Activated naive CD4-positive, alpha-beta T cell treated with anti-CD3 and anti-CD28 coated beads for 36 hours (primary cell): ENCODE measurements at regions of chr2 and their contacts with region 1.

Region 1: GRCh38 chr2:69643602-69644505 is at the start of gene AAK1:
- DNase-seq: peak; percentile 90
- H3K4me3 Mint-ChIP-seq: peak within 1 kb of the TSS; percentile 81
- H3K27ac Mint-ChIP-seq: peak within 1 kb of the TSS; percentile 98
- H3K4me1 Mint-ChIP-seq: peaks cover 47% of the 10 kb centered on the region
- H3K27me3 Mint-ChIP-seq: no peaks in the 10 kb centered on the region
- total RNA-seq, gene AAK1: 77.4 to 79.5 TPM

Region 2: DNA sequence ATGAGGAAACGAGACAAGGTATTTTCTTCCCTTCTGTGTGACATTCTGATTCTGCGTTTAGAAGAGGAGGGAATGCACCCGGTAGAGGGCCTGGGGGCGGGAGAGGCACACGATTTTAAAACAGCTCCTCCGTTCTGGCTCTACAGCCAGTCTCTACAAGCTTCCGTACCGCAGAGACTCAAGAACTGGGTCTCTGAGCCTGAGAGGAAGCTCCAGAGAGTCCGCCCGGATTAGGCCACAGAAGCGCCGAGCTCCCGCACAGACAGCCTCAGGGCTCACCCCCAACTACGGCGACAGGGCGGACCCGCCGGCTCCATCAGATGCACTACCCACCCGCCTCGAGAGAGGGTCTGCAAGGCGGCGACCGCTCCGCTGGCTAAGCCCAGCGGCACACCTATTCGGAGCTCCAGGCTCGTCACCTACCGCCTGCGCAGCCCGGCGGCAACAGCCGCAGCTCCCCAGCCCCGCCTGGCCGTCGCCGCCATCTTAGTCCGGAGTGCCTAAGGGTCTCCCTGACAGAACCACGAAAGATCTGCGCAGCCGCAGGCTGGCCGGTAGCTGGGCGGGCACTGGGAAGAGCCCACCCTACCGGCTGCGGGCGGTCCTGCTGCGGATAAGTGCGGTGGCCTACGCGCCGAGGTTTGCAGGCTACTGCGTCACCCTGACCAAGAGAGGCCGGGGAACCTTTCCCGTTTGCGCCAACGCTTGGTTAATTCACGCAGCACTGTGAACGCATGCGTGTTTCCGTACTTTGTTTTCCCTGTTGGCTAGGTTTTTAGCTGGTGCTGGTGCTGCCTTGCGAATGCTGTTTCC is 206.7 kb before region 1 on chr2 and contains the start of gene NFU1:
- CTCF ChIA-PET with region 1: interaction called, 3 read pairs
- intact Hi-C with region 1: loop called (anchors 2 kb)
- DNase-seq: peak; percentile 90
- H3K4me3 Mint-ChIP-seq: peak within 1 kb of the TSS; percentile 95
- H3K27ac Mint-ChIP-seq: peak within 1 kb of the TSS; percentile 94
- H3K4me1 Mint-ChIP-seq: peaks cover 29% of the 10 kb centered on the region
- H3K27me3 Mint-ChIP-seq: no peaks in the 10 kb centered on the region
- total RNA-seq, gene NFU1: 35.7 to 39.3 TPM

Region 3: DNA sequence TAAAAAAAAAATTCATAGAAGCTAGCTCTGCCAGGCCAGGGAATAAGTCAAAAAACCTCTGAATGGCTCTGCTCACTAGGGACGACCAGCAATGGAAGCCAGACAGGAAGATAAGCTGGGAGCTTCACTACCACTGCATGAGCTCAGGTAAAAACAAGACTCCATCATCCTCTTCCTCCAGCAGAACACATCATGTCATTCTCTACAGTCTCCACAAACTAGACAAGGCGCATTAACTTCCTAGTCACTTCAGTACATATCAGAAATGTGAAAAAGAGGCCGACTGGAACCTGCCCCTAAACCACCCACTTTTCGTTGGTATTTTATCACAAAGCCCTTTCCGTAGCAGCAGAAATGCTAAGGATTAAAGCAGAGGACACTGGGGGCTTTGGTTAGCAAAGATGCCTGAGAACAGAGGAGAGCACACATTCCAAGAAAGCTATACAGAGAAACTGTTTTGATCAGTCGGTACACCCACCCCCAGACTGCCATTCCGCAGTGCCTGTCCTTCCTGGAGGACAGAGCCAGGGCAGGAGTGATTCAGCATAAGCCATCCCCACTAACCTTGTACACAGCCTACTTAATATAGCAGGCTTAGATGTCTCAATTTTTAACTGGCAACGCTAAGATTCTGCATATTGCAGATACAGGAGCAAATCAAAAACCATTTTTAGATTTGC is 53.7 kb before region 1 on chr2:
- CTCF ChIA-PET with region 1: interaction called, 3 read pairs
- intact Hi-C with region 1: loop called (anchors 1 kb)
- DNase-seq: no peak
- H3K4me3 Mint-ChIP-seq: peak overlapping the region; percentile 1
- H3K27ac Mint-ChIP-seq: peak overlapping the region; percentile 68
- H3K4me1 Mint-ChIP-seq: peaks cover 79% of the 10 kb centered on the region
- H3K27me3 Mint-ChIP-seq: no peaks in the 10 kb centered on the region

Region 4: GRCh38 chr2:69674316-69674670 is 30.4 kb after region 1 on chr2:
- CTCF ChIA-PET with region 1: no interaction called
- intact Hi-C with region 1: loop called (anchors 1 kb)
- DNase-seq: no peak
- H3K4me3 Mint-ChIP-seq: no peak overlapping the region
- H3K27ac Mint-ChIP-seq: no peak overlapping the region
- H3K4me1 Mint-ChIP-seq: peaks cover 28% of the 10 kb centered on the region
- H3K27me3 Mint-ChIP-seq: no peaks in the 10 kb centered on the region

Region 5: DNA sequence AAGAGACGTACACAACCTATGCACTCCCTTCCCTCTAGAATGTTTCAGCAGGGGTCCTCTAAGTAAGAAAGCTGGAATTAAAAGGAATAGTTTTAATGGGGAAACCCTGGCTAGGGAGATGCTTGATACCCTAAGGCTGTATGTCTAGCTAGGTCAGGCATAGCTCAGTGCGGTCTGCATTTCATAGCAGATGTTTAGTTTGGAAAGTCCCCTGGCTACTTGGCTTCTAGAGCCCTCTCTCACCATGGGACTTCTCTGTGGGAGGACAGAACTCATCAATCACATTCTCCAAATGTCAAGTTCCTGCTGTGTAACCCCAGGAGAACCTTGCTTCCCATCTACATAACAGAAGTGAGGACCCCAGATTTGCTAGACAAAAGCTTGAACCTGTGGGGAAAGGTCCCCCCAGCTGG is 74.0 kb after region 1 on chr2:
- CTCF ChIA-PET with region 1: interaction called, 13 read pairs
- intact Hi-C with region 1: loop called (anchors 1 kb)
- DNase-seq: no peak
- H3K4me3 Mint-ChIP-seq: no peak overlapping the region
- H3K27ac Mint-ChIP-seq: no peak overlapping the region
- H3K4me1 Mint-ChIP-seq: peaks cover 6% of the 10 kb centered on the region
- H3K27me3 Mint-ChIP-seq: no peaks in the 10 kb centered on the region

Region 6: GRCh38 chr2:69914170-69914960 is 270.5 kb after region 1 on chr2:
- CTCF ChIA-PET with region 1: no interaction called
- intact Hi-C with region 1: loop called (anchors 1 kb)
- DNase-seq: peak; percentile 100
- H3K4me3 Mint-ChIP-seq: peak overlapping the region; percentile 83
- H3K27ac Mint-ChIP-seq: peak overlapping the region; percentile 87
- H3K4me1 Mint-ChIP-seq: peaks cover 36% of the 10 kb centered on the region
- H3K27me3 Mint-ChIP-seq: no peaks in the 10 kb centered on the region

Region 7: DNA sequence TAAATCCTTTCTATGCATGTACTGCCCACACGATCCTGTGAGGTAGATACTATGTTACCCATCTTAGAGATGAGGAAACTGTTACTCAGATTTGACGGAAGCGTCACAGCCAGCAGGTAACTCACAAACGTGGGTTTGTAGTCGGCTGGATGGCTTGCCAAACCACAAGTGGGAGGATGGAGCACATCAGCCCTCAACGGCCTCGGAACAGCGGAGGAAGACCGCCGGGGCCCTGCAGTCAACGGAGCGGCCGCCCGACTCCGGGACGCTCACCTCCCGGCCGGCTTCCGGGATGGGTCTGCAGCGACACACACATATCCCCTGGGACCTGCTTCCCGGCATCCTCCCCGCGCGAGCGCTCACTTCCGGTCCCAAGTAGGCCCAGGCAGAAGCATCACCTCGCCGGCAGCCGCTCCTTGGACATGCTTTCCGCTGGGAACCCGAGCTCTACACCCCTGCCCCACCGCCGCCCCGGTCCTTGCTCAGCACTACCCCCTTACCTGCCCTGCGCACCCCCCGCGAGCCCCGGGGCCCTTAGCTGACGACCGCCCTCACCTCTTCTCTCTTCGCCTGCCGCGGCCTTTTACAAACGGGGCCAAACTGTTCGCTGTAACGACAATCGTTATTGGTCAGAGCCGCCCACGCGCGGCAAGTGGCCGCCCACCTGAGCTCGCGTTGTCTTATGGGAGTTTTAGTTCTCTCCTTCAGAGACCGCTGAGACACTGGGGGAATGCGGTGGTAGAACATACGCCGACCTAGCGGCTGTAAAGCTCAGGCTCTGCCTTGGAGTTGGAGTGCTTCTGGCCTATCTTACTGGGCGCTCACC is 546.8 kb after region 1 on chr2 and contains the start of gene C2orf42:
- CTCF ChIA-PET with region 1: no interaction called
- intact Hi-C with region 1: loop called (anchors 2 kb)
- DNase-seq: peak; percentile 98
- H3K4me3 Mint-ChIP-seq: peak within 1 kb of the TSS; percentile 87
- H3K27ac Mint-ChIP-seq: peak within 1 kb of the TSS; percentile 98
- H3K4me1 Mint-ChIP-seq: peaks cover 21% of the 10 kb centered on the region
- H3K27me3 Mint-ChIP-seq: no peaks in the 10 kb centered on the region
- total RNA-seq, gene C2orf42: 19.2 to 23.3 TPM